Heart left ventricle (tissue), 16 donors: ENCODE measurements at regions of chr12 and their contacts with region 1.

Region 1: DNA sequence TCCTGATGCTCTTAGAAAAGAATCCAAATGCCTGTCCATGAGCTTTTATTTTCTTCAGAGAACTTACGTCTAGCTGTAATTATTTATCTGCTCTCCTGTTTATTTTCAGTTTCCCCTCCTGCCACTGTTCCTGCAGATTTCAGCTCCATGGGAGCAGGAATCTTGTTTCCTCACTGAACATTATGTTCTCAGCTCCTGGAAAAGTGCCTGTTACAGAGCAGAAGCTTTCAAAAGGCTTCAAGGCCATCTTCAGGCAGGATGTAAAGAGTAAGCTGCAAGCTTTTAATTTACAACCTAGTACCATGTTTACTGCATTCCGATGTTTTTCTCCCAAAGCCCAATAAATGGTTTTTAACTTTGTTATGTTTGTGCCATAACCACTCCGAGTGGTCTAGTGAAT is 98.4 kb upstream of the BTG1 start:
- DNase-seq: peak in 2 of 5 donors; percentile 32 to 61
- ATAC-seq: peak; percentile 95 to 98 (median 96)
- H3K4me3 ChIP-seq: peak overlapping the region in 1 of 12 donors; percentile 23
- H3K27ac ChIP-seq: peak overlapping the region; percentile 48 to 78 (median 68)
- H3K4me1 ChIP-seq: peaks cover 5 to 25% (median 15%) of the 10 kb centered on the region in 12 donors
- H3K27me3 ChIP-seq: no peaks in the 10 kb centered on the region
- CTCF ChIP-seq: peak in 8 of 12 donors; percentile 22 to 54 (median 32)
- POLR2A ChIP-seq: no peak

Region 2: DNA sequence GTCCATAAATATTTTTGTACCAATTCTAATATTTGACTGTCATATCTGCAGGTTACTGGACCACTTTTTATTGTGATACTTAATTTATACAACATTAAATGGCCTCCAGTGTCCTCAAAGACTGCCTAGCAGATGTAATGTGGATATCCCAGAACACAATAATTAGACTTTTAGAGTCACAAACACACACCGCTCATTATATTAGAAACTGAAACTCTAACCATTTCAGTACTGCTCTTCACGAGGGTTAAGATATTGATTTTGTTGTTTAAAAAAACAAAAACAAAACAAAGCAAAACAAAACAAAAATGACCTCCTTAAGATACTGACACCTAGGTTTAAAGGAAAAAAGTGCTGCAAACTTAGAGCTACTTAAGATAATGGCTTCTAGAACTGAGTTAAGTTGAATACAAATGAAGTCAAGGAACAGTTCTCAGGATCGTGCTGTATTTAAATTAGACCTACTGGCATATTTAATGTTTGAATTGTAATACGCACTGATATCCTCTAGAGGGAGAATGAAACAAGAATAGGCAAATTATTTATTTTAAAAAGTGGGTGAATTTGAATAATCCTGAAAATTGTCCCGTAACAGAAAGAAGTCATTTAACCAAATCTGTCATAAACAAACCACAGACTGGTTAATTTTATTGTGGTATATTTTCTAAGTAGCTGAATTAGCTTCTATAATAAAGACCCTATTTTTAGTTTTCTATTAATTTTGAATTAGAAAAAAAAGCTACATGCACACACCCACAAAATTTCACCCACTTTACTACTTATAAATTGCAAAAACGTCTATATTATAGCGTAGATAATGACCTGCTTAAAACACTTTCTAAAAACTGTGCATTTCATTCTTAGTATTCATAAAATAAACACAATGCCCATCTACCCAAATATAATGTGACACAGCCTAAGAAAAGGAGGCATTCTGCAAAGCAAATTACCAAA is 666.2 kb before region 1 on chr12:
- intact Hi-C with region 1: loop called in 2 of 10 experiments (anchors 5 to 10 kb)
- DNase-seq: no peak
- ATAC-seq: peak in 2 of 4 donors; percentile 45 to 50
- H3K4me3 ChIP-seq: peak overlapping the region in 9 of 12 donors; percentile 17 to 37 (median 26)
- H3K27ac ChIP-seq: peak overlapping the region in 3 of 12 donors; percentile 10 to 45 (median 35)
- H3K4me1 ChIP-seq: peaks cover 0 to 15% (median 7%) of the 10 kb centered on the region in 12 donors
- H3K27me3 ChIP-seq: no peaks in the 10 kb centered on the region
- CTCF ChIP-seq: peak; percentile 62 to 82 (median 72)
- POLR2A ChIP-seq: no peak

Region 3: DNA sequence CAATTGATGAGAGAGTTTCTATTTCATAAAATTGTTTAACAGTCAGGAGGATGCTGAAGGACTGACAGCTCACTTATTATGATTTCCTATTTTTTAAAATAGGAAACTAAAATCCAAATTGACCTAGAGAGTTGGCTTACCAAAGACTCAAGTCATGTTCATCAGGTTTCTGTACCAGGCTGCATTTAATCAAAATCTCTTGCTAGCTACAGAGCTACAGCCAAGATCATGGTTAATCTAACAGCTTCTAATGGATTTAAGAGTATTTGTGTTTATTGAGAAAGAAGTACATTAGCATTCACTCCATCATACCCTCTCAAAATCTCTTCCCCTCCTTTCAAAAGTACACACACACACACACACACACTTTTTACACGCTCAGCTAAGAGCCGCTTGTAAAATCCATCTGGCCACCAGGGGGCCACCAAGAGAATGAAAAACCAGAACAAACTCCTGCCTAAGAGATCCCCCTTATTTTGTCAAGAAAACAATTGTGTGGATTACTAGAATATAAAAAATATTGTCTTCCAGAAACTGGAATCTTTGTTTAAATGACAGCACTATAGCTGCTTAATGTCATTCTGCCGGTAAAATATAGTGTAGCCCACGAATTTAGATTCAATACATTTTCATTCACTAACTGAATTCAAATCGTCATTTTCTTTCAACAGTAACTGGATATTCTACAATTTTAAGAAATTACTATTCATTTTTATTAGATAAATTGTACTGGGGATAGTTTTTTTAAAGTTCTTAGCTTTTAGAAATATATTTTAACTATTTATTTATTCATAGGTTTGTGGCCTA is 432.4 kb before region 1 on chr12:
- intact Hi-C with region 1: loop called in 5 of 10 experiments (anchors 5 to 10 kb)
- DNase-seq: peak; percentile 56 to 77 (median 67)
- ATAC-seq: peak in 3 of 4 donors; percentile 61 to 76 (median 68)
- H3K4me3 ChIP-seq: no peak overlapping the region
- H3K27ac ChIP-seq: no peak overlapping the region
- H3K4me1 ChIP-seq: no peaks in the 10 kb centered on the region
- H3K27me3 ChIP-seq: no peaks in the 10 kb centered on the region
- CTCF ChIP-seq: peak; percentile 72 to 90 (median 82)
- POLR2A ChIP-seq: no peak

Region 4: DNA sequence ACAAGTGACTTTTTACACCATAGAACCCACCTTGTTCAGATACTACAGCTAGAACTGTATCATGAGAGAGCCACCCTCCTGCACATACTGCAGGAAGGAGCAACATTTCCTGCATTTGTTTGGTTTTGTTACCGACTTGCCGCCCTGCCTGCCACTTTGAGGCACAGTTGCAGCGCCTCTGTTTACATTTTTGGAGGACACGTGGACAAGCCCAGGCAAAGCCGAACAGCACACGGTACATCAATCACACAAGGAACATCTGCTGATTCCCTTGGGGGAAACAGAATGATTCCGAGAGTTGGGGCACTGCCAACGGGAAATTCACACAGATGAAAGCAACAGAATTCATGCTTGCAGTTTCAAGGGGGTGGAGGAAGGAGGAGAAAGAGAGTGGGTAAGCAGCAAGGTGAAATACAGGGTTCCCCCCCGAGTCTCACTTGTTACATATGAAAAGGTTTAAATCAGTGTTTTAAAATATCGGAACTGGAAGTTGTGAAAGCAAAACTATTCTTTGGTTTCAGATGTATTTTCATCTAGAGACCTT is 209.1 kb before region 1 on chr12:
- intact Hi-C with region 1: loop called in 1 of 10 experiments (anchors 10 kb)
- DNase-seq: peak; percentile 28 to 62 (median 47)
- ATAC-seq: peak in 3 of 4 donors; percentile 42 to 69 (median 66)
- H3K4me3 ChIP-seq: peak overlapping the region in 8 of 12 donors; percentile 4 to 48 (median 30)
- H3K27ac ChIP-seq: peak overlapping the region in 8 of 12 donors; percentile 2 to 78 (median 24)
- H3K4me1 ChIP-seq: peaks cover 0 to 74% (median 23%) of the 10 kb centered on the region in 12 donors
- H3K27me3 ChIP-seq: no peaks in the 10 kb centered on the region
- CTCF ChIP-seq: no peak
- POLR2A ChIP-seq: no peak

Region 5: DNA sequence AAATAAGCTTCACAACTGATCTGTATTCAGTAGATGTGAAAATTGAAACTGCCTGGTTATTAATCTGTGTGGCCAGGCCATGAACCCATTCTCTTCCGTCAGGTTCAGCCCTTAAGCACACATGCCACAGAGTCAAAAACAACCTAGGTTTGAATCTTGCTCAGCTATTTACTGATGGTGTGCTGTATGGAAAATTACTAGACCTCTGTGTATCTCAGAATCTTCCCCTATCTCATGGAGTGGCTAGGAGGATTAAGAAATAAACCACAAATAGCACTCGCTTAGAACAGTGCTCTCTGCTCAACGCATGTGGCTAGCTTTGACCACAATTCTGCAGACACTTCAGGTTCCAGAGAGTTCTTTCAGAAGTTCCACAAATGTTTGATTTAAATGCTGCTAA is 218.0 kb after region 1 on chr12:
- intact Hi-C with region 1: no loop called
- DNase-seq: no peak
- ATAC-seq: peak in 2 of 4 donors; percentile 42 to 61
- H3K4me3 ChIP-seq: no peak overlapping the region
- H3K27ac ChIP-seq: peak overlapping the region in 2 of 12 donors; percentile 12 to 55
- H3K4me1 ChIP-seq: peaks cover 0 to 38% (median 3%) of the 10 kb centered on the region in 12 donors
- H3K27me3 ChIP-seq: no peaks in the 10 kb centered on the region
- CTCF ChIP-seq: no peak
- POLR2A ChIP-seq: no peak